Mammary epithelial cell (primary cell): ENCODE measurements at regions of chr10 and their contacts with region 1.

Region 1: DNA sequence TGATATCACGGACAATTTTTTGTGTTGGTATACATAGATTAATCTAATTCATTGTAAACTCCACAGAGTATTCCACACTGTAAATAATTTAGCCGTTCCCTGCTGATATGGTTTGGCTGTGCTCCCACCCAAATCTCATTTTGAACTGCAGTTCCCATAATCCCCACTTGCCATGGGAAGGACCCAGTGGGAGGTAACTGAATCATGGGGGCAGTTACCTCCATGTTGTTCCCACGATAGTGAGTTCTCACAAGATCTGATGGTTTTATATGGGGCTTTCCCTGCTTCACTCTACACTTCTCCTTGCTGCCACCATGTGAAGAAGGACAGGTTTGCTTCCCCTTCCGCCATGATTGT is 558.0 kb downstream of the SORCS1 start:
- DNase-seq: no peak
- H3K4me3 ChIP-seq: no peak overlapping the region
- H3K27ac ChIP-seq: no peak overlapping the region
- H3K4me1 ChIP-seq: peaks cover 22% of the 10 kb centered on the region
- H3K27me3 ChIP-seq: no peaks in the 10 kb centered on the region
- CTCF ChIP-seq: no peak

Region 2: DNA sequence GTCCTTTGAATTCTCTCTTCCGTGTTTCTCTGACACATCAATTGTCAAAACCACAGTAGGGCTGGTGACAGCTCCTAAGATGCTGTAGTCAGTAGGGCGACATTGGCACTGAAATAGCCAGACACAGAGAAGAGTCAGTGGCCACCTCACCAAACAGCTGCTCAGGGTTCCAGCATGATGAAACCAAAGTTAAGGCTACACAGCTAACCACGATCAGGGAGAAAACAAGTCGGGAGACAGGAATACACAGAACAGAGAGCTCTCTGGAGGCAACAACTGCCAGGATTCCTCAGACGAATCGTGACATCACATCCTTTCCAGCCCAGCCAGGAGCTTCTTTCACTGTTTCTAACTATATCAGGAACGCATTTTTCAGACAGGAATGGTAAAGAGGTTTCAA is 364.2 kb before region 1 on chr10:
- CTCF ChIA-PET with region 1: interaction called, 11 read pairs
- dilution Hi-C with region 1: no loop called
- in situ Hi-C with region 1: no loop called
- intact Hi-C with region 1: no loop called
- DNase-seq: no peak
- H3K4me3 ChIP-seq: no peak overlapping the region
- H3K27ac ChIP-seq: no peak overlapping the region
- H3K4me1 ChIP-seq: no peaks in the 10 kb centered on the region
- H3K27me3 ChIP-seq: peaks cover 3% of the 10 kb centered on the region
- CTCF ChIP-seq: no peak

Region 3: GRCh38 chr10:106682175-106682574 is 75.6 kb after region 1 on chr10:
- CTCF ChIA-PET with region 1: no interaction called
- dilution Hi-C with region 1: no loop called
- in situ Hi-C with region 1: no loop called
- intact Hi-C with region 1: no loop called
- DNase-seq: no peak
- H3K4me3 ChIP-seq: no peak overlapping the region
- H3K27ac ChIP-seq: no peak overlapping the region
- H3K4me1 ChIP-seq: no peaks in the 10 kb centered on the region
- H3K27me3 ChIP-seq: peaks cover 2% of the 10 kb centered on the region
- CTCF ChIP-seq: peak in 1 of 2 donors; percentile 12